ENCODE measurements at regions of chr6 and their contacts with region 1.

Region 1: DNA sequence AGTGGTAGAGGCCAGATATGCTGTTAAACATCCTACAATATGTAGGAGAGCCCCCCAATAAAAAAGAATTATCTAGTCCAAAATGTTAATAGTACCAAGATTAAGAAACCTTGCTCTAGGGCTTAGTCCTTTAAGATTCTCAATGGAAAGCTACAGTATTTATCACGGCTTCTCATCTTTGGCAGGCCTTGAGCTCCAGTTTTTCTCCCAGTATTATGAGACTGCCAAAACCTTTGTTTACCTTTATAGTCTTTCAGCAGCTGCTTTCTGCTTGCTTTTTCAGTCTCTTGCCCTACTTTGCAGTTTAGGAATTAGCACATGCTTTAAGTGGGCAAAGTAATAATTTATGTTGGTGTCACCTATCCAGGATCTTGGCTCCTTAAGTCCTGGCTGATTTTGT is 59.7 kb downstream of the NHLRC1 start:
- DNase-seq: no peak
- H3K4me3 ChIP-seq: no peak overlapping the region
- CTCF ChIP-seq: no peak

Region 2: DNA sequence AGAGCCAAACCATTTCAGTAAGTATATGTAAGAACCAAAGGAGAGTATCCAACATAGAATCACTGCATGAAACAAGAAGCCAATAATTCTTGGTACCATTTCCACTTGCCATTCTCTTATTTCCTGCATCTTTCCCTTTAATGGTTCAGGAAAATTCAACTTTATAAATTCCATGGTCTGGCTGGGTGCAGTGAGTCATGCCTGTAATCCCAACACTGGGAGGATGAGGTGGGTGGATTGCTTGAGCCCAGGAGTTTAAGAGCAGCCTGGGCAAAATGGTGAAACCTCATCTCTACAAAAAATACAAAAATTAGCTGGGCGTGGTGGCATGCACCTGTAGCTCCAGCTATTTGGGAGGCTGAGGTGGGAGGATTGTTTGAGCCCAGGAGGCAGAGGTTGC is 38.5 kb after region 1 on chr6:
- in situ Hi-C with region 1: loop called (anchors 5 kb)
- DNase-seq: no peak
- H3K4me3 ChIP-seq: no peak overlapping the region
- CTCF ChIP-seq: no peak

Region 3: GRCh38 chr6:18148304-18149025 is 85.7 kb after region 1 on chr6:
- in situ Hi-C with region 1: no loop called
- DNase-seq: no peak
- H3K4me3 ChIP-seq: no peak overlapping the region
- CTCF ChIP-seq: no peak

Measured in astrocyte of the cerebellum (primary cell).